Gastrocnemius medialis (tissue), 4 donors: ENCODE measurements at regions of chr15 and their contacts with region 1.

Region 1: DNA sequence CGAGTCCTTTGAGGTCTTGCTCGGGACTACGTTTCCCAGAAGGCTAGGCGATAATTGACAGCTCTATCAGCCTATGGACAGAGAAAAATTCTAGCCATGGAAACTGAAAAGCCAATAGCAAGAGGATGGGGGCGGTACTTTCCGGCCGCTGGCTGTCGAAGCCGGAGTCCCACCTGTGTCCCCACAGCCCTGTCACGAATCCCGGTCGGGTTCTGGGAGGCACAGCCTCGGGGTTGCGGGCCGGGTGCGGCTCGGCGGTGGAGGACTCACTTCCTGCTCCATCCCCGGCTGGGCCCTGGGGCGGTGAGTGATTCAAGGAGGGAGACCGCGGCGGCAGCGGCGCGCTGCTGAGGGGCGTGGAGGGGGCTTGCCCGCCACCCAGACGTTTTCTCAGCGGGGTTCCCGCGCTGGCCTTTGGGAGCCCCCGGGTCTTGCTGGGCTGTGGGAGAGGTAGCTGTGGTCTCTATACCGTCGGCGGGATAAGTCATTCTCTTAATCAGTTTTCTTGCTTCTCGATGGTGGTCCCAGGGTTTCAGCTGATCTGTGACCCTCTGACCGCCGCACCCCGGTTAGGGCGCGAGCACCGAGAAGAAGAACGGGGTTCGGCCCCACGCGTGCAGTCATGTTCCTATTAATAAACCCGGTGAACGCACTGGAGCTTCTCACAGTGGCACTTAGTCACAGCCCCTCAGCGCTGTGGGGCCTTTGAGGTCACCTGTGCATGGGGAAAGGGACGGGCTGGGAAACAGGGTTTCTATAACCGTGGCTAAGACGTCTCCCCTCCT is at the start of gene ZNF774:
- DNase-seq: peak; percentile 94 to 96
- ATAC-seq: peak; percentile 97 to 99
- H3K4me3 ChIP-seq: peak within 1 kb of the TSS; percentile 76 to 95 (median 84)
- H3K27ac ChIP-seq: peak within 1 kb of the TSS; percentile 90 to 99 (median 93)
- H3K4me1 ChIP-seq: peaks cover 4 to 9% of the 10 kb centered on the region in 2 donors
- H3K27me3 ChIP-seq: no peaks in the 10 kb centered on the region
- CTCF ChIP-seq: no peak
- POLR2A ChIP-seq: peak; percentile 94 to 96
- total RNA-seq, gene ZNF774: 2.1 to 17.1 (median 5.4) TPM

Region 2: DNA sequence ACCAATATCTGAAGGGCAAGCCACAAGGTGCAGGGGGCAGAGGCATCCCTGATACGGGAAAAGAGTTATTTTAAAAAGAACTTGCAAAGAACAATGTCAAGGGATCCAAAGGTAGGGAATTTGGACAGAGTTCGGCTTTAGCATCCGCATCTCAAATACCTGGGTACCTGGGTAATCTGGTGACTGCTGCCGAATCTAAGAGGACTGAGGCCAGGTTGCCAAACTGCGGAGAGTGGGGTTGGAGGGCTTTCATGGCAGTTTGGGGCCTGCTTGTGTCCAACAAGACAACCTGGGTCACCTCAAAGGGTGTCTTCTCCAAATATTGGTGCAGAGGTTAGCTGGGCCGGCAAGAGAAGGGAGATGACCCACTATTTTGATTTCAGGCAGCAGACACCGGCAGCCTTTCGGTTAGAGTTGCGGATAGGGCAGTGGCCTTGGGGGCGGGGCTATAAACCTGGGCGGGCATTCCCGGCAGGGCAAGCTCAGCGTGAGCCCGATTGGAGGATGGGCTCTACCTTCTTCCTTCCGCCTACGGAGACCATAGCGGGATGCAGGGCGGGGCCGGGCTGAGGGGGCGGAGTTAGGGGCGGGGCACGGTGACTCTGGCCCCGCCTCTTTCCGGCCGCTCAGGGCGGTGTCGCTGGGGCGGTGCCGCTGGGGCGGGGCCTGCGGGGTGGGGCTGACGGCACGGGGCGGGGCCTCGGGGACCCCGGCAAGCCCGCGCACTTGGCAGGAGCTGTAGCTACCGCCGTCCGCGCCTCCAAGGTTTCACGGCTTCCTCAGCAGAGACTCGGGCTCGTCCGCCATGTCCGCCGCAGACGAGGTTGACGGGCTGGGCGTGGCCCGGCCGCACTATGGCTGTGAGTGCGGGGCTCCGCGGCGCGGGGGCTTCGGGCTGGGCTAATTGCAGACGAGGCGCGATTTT is 35.5 kb after region 1 on chr15 and contains the start of gene IQGAP1:
- in situ Hi-C with region 1: no loop called
- intact Hi-C with region 1: loop called (anchors 1 kb)
- DNase-seq: peak; percentile 98
- ATAC-seq: peak; percentile 85 to 90
- H3K4me3 ChIP-seq: peak within 1 kb of the TSS; percentile 74 to 89 (median 78)
- H3K27ac ChIP-seq: peak within 1 kb of the TSS; percentile 91 to 100 (median 96)
- H3K4me1 ChIP-seq: peaks cover 37 to 40% of the 10 kb centered on the region in 2 donors
- H3K27me3 ChIP-seq: no peaks in the 10 kb centered on the region
- CTCF ChIP-seq: no peak
- POLR2A ChIP-seq: peak; percentile 89 to 93
- total RNA-seq, gene IQGAP1: 39.1 to 92.7 (median 59.1) TPM